Transverse colon (tissue), 4 donors: ENCODE measurements at regions of chr6 and their contacts with region 1.

Region 1: DNA sequence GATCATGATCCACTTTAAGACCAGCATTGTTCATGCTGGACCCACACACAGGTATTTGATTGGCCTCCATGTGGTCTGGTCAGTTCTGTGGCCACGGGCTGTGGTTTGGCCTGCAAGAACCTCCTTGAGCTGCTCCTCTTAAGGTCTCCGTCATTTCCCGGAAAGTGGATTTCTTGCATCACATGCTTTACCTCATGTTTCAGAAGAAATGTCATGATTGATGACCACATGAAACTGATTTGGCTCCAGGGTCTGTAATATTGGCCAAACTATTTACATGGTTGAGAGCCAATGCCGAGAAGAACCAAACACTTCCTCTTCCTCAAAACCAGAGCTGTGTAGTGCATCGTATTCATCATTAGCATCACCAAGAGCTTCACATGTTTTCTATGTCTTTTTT is 13.2 kb upstream of the RSPH3 start:
- DNase-seq: no peak
- H3K4me3 ChIP-seq: no peak overlapping the region
- H3K27ac ChIP-seq: no peak overlapping the region
- H3K4me1 ChIP-seq: peaks cover 0 to 4% (median 0%) of the 10 kb centered on the region in 4 donors
- H3K27me3 ChIP-seq: no peaks in the 10 kb centered on the region
- CTCF ChIP-seq: no peak
- EP300 ChIP-seq: no peak
- POLR2A ChIP-seq: no peak

Region 2: GRCh38 chr6:159125014-159125609 is 111.9 kb after region 1 on chr6:
- in situ Hi-C with region 1: loop called in 2 of 4 experiments (anchors 10 kb)
- intact Hi-C with region 1: no loop called
- DNase-seq: no peak
- H3K4me3 ChIP-seq: no peak overlapping the region
- H3K27ac ChIP-seq: no peak overlapping the region
- H3K4me1 ChIP-seq: no peaks in the 10 kb centered on the region
- H3K27me3 ChIP-seq: no peaks in the 10 kb centered on the region
- CTCF ChIP-seq: no peak
- EP300 ChIP-seq: no peak
- POLR2A ChIP-seq: no peak

Region 3: DNA sequence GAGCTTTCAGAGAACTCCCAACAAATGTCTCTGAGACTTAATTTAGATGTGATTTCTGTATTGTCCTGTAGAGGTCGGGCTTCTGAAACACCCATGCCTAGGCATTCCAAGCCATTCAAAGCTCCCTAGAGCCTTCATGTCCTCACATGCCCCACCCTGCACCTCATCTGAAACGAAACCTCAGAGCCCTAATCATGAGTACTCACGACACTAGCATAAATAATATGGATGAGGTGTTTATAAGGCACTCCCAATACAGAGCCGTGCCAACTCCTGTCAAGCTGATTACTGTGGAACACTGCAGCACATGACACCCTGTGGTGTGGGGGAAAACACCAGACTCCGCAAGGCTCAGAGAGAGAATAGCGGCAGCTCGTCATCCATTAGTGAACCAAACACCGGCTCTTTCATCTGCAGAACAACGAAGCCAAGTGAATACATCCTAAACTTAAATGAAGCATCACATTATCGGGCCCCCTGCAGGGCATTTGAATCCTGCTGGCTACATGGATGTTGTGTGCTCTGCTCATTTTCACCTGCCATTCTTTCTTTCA is 239.8 kb after region 1 on chr6:
- in situ Hi-C with region 1: no loop called
- intact Hi-C with region 1: no loop called
- DNase-seq: no peak
- H3K4me3 ChIP-seq: no peak overlapping the region
- H3K27ac ChIP-seq: no peak overlapping the region
- H3K4me1 ChIP-seq: peaks cover 0 to 4% (median 1%) of the 10 kb centered on the region in 4 donors
- H3K27me3 ChIP-seq: no peaks in the 10 kb centered on the region
- CTCF ChIP-seq: peak; percentile 37 to 56 (median 47)
- EP300 ChIP-seq: no peak
- POLR2A ChIP-seq: no peak